Left ventricle myocardium superior (tissue), 1 donor: ENCODE measurements at regions of chr12 and their contacts with region 1.

Region 1: DNA sequence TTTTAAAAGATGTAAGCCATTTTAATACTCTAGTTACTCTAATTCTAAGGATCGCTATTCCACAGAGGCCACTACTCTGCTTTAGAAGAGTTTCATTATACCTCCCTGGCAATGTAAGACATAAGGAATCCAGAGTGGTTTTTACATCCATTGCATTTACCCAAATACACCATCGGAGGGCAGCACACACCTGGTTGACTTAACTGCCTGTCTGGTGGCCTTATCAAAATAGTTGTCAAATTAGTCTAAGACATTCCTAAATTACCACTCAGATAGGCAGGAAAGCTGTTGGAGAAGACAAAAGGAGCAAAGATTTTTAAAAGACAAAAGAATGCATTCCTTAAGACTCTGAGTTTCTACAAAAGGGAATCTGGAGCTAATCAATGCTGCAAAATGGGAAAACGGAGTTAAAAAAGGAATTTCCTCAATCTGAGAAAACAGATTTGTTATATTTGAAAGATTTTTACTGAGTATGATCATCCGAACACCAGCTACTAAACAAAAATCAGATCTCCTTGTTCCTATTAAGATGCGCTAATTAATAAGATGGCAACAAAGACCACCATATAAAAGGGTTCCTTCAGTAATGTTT is 33.8 kb upstream of the FGD4 start:
- DNase-seq: no peak
- ATAC-seq: peak; percentile 72

Region 2: GRCh38 chr12:32413412-32413811 is 47.8 kb after region 1 on chr12:
- intact Hi-C with region 1: no loop called
- DNase-seq: no peak
- ATAC-seq: no peak

Region 3: GRCh38 chr12:32533971-32534590 is 168.5 kb after region 1 on chr12:
- intact Hi-C with region 1: no loop called
- DNase-seq: peak; percentile 49
- ATAC-seq: peak; percentile 88

Region 4: GRCh38 chr12:32659908-32660440 is 294.4 kb after region 1 on chr12:
- intact Hi-C with region 1: loop called (anchors 5 kb)
- DNase-seq: no peak
- ATAC-seq: no peak

Region 5: GRCh38 chr12:32671930-32672780 is 306.6 kb after region 1 on chr12:
- intact Hi-C with region 1: loop called (anchors 5 kb)
- DNase-seq: no peak
- ATAC-seq: peak; percentile 90